PC-3 (cell line): ENCODE measurements at regions of chr3 and their contacts with region 1.

Region 1: GRCh38 chr3:10192953-10193691 is 28.4 kb downstream of the IRAK2 start:
- DNase-seq: peak; percentile 96
- ATAC-seq: peak; percentile 60
- H3K4me3 ChIP-seq: no peak overlapping the region
- H3K27ac ChIP-seq: peak overlapping the region; percentile 96
- H3K4me1 ChIP-seq: peaks cover 73% of the 10 kb centered on the region
- H3K27me3 ChIP-seq: no peaks in the 10 kb centered on the region
- CTCF ChIP-seq: peak; percentile 85

Region 2: GRCh38 chr3:9976721-9977709 is 216.1 kb before region 1 on chr3:
- CTCF ChIA-PET with region 1: no interaction called
- POLR2A ChIA-PET with region 1: no interaction called
- intact Hi-C with region 1: loop called (anchors 10 kb)
- DNase-seq: peak; percentile 98
- ATAC-seq: peak; percentile 96
- H3K4me3 ChIP-seq: peak overlapping the region; percentile 36
- H3K27ac ChIP-seq: peak overlapping the region; percentile 93
- H3K4me1 ChIP-seq: peaks cover 20% of the 10 kb centered on the region
- H3K27me3 ChIP-seq: no peaks in the 10 kb centered on the region
- CTCF ChIP-seq: no peak

Region 3: GRCh38 chr3:10115326-10116137 is 77.6 kb before region 1 on chr3 and contains the start of gene BRK1:
- CTCF ChIA-PET with region 1: no interaction called
- POLR2A ChIA-PET with region 1: interaction called, 23 read pairs
- intact Hi-C with region 1: no loop called
- DNase-seq: peak; percentile 98
- ATAC-seq: peak; percentile 97
- H3K4me3 ChIP-seq: peak within 1 kb of the TSS; percentile 94
- H3K27ac ChIP-seq: peak within 1 kb of the TSS; percentile 34
- H3K4me1 ChIP-seq: peaks cover 19% of the 10 kb centered on the region
- H3K27me3 ChIP-seq: no peaks in the 10 kb centered on the region
- CTCF ChIP-seq: no peak
- total RNA-seq, gene BRK1: 110 and 140 TPM in 2 replicates

Region 4: GRCh38 chr3:10164546-10165393 is 28.4 kb before region 1 on chr3 and contains the start of gene IRAK2:
- CTCF ChIA-PET with region 1: interaction called, 9 read pairs
- POLR2A ChIA-PET with region 1: interaction called, 7 read pairs
- intact Hi-C with region 1: loop called (anchors 2 kb)
- DNase-seq: peak; percentile 71
- ATAC-seq: peak; percentile 91
- H3K4me3 ChIP-seq: peak within 1 kb of the TSS; percentile 96
- H3K27ac ChIP-seq: peak within 1 kb of the TSS; percentile 33
- H3K4me1 ChIP-seq: no peaks in the 10 kb centered on the region
- H3K27me3 ChIP-seq: no peaks in the 10 kb centered on the region
- CTCF ChIP-seq: peak; percentile 53
- total RNA-seq, gene IRAK2: 4.7 and 5.5 TPM in 2 replicates

Region 5: DNA sequence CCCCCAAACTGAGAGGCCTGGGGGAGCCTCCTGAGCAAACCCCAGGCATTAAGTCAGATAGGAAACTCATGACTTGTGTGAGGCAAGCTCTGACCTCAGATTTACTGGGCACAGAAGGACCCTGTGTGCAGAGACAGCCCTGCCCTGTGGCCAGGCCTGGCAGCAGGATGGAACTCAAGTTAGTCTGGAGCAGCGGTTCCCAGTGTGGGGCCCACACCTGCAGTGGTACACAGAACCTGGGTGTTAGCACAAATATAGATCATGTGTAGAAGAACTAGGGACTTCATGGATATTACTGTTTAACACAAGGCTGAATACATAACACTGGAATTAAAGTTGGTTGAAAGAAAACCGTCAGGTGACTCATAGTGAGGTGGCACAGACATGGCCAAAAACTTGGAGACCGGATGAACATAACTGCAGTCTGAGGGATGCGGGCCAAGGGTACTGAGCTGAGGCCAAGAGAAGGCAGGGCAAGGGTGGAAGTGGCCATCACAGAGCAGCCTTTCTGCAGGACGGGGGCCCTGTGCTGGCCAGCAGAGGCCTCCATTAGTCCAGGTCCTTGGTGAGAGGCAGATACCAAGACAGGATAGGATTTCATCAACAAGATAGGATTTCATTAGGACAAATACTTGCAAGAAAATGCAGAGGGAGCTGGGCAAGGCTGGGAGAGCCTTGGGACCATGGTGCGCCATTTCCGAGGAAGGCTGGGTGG is 12.5 kb after region 1 on chr3:
- CTCF ChIA-PET with region 1: interaction called, 26 read pairs
- POLR2A ChIA-PET with region 1: interaction called, 34 read pairs
- intact Hi-C with region 1: loop called (anchors 1 kb)
- DNase-seq: peak; percentile 98
- ATAC-seq: peak; percentile 77
- H3K4me3 ChIP-seq: no peak overlapping the region
- H3K27ac ChIP-seq: peak overlapping the region; percentile 94
- H3K4me1 ChIP-seq: peaks cover 49% of the 10 kb centered on the region
- H3K27me3 ChIP-seq: no peaks in the 10 kb centered on the region
- CTCF ChIP-seq: no peak

Region 6: DNA sequence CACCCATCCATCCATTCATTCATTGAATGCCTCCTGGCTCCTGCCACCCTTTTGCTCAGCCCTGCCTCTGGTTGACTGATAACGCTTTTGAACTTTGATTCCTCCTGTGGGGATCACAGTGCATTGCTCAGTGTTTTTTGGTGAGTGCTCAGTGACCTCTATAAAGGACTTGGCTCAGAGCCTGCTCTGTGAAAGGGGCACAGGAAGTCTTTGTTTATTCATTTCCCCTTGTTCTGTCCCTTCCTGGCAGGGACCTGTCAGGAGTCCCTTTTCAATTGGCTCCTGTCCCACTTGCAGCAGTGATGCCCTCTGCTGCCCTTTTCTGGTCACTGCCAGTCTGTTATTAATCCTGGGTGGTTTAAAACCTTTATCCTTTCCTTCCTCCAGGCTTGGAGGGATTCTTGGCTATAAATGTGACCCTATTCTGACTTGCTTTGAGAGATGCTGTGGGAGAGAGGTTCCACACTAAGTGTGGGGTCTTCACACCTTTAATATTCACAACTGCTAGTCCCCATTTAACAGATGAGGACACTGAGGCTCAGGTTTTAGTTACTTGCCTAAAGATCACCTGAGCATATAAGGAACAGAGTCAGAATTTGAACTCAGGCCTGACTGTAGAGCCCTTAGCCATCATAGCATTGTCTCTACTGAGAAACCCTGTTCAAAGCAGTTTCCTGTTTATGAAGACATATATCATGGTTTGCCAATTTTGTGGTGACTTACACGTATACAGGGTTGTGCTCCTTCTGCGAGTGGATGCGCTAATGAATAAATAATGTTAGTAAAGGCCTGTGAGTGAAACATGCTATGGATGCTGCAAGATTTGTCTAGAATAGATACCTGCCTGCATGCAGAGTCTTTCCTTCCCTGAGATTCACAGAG is 31.9 kb after region 1 on chr3:
- CTCF ChIA-PET with region 1: interaction called, 12 read pairs
- POLR2A ChIA-PET with region 1: interaction called, 4 read pairs
- intact Hi-C with region 1: loop called (anchors 1 kb)
- DNase-seq: peak; percentile 92
- ATAC-seq: peak; percentile 50
- H3K4me3 ChIP-seq: no peak overlapping the region
- H3K27ac ChIP-seq: no peak overlapping the region
- H3K4me1 ChIP-seq: peaks cover 36% of the 10 kb centered on the region
- H3K27me3 ChIP-seq: no peaks in the 10 kb centered on the region
- CTCF ChIP-seq: peak; percentile 96

Region 7: DNA sequence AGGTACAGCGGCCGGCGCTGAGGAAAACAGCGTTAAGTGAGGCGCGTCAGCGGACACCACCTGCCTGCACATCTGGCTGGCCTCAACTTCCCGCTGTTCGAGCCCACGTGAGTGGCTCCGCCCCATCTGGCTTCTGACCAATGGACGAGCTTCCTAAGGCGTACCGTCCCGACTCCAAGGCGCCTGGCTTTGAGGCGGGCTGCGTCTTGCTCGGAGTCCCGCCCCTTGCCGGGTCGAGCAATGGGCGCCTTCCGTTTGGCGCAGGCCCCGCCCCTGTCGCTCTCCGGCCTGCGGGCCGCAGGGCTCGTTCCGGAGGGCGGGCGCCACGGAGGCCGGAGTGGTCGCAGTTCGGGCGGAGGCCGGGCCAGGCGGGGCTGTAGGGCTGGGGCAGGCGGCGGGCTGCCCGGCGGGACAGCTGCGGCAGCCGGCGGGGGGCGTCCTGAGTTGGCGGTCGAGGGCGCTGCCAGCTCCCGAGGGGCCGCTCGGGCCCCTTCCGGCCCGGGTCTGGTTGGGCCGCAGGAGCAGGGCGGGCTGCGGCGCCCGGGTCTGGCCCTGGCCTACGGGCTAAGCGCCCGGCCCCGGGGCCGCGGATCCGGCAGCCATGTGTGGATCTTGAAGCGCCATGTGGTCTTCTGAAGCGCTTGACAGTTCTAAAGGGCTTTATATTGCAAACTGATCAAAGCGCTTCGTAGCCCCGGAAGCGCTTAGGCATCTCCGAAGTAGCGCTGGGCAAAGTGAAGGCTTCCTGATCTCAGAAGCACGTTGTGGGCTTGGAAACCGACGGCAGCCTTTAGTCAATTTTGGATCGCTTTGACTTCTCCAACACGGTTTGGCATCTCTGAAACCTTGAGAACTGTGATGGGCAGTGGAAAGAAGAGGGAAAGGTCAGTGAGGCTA is 55.3 kb after region 1 on chr3 and contains the start of gene TATDN2:
- CTCF ChIA-PET with region 1: no interaction called
- POLR2A ChIA-PET with region 1: interaction called, 8 read pairs
- intact Hi-C with region 1: loop called (anchors 1 kb)
- DNase-seq: peak; percentile 98
- ATAC-seq: peak; percentile 96
- H3K4me3 ChIP-seq: peak within 1 kb of the TSS; percentile 97
- H3K27ac ChIP-seq: peak within 1 kb of the TSS; percentile 15
- H3K4me1 ChIP-seq: peaks cover 17% of the 10 kb centered on the region
- H3K27me3 ChIP-seq: no peaks in the 10 kb centered on the region
- CTCF ChIP-seq: no peak
- total RNA-seq, gene TATDN2: 14.1 and 25.6 TPM in 2 replicates

Region 8: DNA sequence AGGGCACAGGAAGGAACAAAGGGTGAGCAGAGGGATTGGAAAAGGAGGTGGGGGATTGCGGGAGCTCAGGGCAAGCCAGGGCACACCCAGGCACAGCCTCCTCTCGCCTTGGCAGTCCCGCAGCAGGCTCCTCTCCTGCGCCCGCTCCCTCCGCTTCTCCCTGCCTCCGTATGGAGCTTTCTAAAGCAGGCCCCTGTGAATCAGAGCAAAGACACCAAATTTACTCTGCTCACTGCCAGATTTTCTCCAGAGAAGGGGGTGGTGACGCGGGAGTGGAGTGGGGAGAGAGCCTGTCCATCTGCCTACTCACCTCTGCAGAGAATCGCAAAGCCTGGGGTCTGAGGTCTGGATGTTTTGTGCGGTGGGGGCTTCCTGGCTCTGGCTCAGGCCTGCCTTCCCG is 292.3 kb after region 1 on chr3:
- CTCF ChIA-PET with region 1: no interaction called
- POLR2A ChIA-PET with region 1: no interaction called
- intact Hi-C with region 1: no loop called
- DNase-seq: no peak
- ATAC-seq: no peak
- H3K4me3 ChIP-seq: no peak overlapping the region
- H3K27ac ChIP-seq: no peak overlapping the region
- H3K4me1 ChIP-seq: no peaks in the 10 kb centered on the region
- H3K27me3 ChIP-seq: no peaks in the 10 kb centered on the region; the same call in 1 of the 2 replicates
- CTCF ChIP-seq: no peak

Region 9: GRCh38 chr3:10594921-10595320 is 401.8 kb after region 1 on chr3:
- CTCF ChIA-PET with region 1: no interaction called
- POLR2A ChIA-PET with region 1: no interaction called
- intact Hi-C with region 1: no loop called
- DNase-seq: peak; percentile 70
- ATAC-seq: peak; percentile 64; the same call in 1 of the 2 replicates
- H3K4me3 ChIP-seq: no peak overlapping the region
- H3K27ac ChIP-seq: no peak overlapping the region
- H3K4me1 ChIP-seq: no peaks in the 10 kb centered on the region
- H3K27me3 ChIP-seq: peaks cover 49% of the 10 kb centered on the region
- CTCF ChIP-seq: no peak